ENCODE measurements at regions of chr7 and their contacts with region 1.

Region 1: GRCh38 chr7:41940760-41941343 is 238.0 kb upstream of the INHBA start:
- DNase-seq: peak; percentile 80
- ATAC-seq: peak; percentile 73
- H3K4me3 ChIP-seq: no peak overlapping the region
- H3K4me3 Mint-ChIP-seq: peak overlapping the region; percentile 68
- H3K27ac ChIP-seq: no peak overlapping the region
- H3K27ac Mint-ChIP-seq: no peak overlapping the region
- H3K4me1 ChIP-seq: peaks cover 17 to 24% of the 10 kb centered on the region in 2 donors
- H3K4me1 Mint-ChIP-seq: peaks cover 27% of the 10 kb centered on the region
- H3K27me3 ChIP-seq: peaks cover 0 to 4% (median 0%) of the 10 kb centered on the region in 4 experiments
- H3K27me3 Mint-ChIP-seq: peaks cover 9% of the 10 kb centered on the region
- CTCF ChIP-seq: peak; percentile 91

Region 2: GRCh38 chr7:41732843-41733306 is 208.0 kb before region 1 on chr7:
- CTCF ChIA-PET with region 1: no interaction called
- POLR2A ChIA-PET with region 1: no interaction called
- intact Hi-C with region 1: no loop called
- DNase-seq: no peak
- ATAC-seq: no peak
- H3K4me3 ChIP-seq: no peak overlapping the region
- H3K4me3 Mint-ChIP-seq: peak overlapping the region; percentile 8
- H3K27ac ChIP-seq: no peak overlapping the region
- H3K27ac Mint-ChIP-seq: no peak overlapping the region
- H3K4me1 ChIP-seq: peaks cover 7 to 8% of the 10 kb centered on the region in 2 donors
- H3K4me1 Mint-ChIP-seq: peaks cover 13% of the 10 kb centered on the region
- H3K27me3 ChIP-seq: no peaks in the 10 kb centered on the region
- H3K27me3 Mint-ChIP-seq: no peaks in the 10 kb centered on the region
- CTCF ChIP-seq: no peak

Region 3: GRCh38 chr7:41916450-41916959 is 24.3 kb before region 1 on chr7:
- CTCF ChIA-PET with region 1: interaction called, 23 read pairs
- POLR2A ChIA-PET with region 1: no interaction called
- intact Hi-C with region 1: no loop called
- DNase-seq: no peak
- ATAC-seq: no peak
- H3K4me3 ChIP-seq: no peak overlapping the region
- H3K4me3 Mint-ChIP-seq: no peak overlapping the region
- H3K27ac ChIP-seq: no peak overlapping the region
- H3K27ac Mint-ChIP-seq: no peak overlapping the region
- H3K4me1 ChIP-seq: no peaks in the 10 kb centered on the region
- H3K4me1 Mint-ChIP-seq: peaks cover 2% of the 10 kb centered on the region
- H3K27me3 ChIP-seq: peaks cover 0 to 2% (median 0%) of the 10 kb centered on the region in 4 experiments
- H3K27me3 Mint-ChIP-seq: peaks cover 3% of the 10 kb centered on the region
- CTCF ChIP-seq: no peak

Region 4: DNA sequence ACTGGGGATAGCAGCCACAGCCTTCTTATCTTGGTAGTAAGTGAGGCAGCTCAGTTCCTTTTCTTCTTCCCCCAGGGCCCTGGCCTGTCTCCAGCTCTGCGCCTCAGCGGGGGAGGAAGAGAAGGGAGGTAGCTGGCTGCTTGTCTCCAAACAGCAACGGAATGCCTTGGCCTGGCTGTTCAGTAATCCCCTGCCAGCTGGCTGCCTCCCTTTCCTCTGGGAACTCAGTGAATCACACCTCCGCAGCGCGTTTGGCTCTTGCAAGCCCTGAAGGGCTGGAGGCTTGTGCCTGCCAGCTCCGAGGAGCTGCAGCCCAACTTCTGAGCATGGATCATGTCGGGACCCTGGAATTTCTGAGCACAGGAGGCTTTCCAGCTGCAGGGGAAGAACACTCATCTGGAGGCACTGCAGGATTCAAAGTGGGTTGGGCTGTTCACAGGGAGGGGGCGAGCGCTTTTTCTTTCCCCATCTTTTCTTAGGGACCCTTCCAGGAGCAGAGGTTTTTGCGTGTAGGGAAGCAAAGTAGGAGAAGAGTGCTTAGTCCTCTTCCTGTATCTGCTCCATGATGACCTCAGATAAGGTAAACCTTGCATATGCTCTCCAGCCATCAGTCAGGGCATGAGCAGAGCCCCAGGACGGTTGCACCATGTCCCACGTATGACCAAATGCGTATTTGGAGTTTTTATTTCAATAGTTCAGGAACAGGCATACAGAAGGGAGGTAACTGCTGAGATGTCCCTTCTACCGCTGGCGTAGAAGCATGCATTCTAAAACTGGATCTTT is 15.2 kb after region 1 on chr7:
- CTCF ChIA-PET with region 1: interaction called, 11 read pairs
- POLR2A ChIA-PET with region 1: no interaction called
- intact Hi-C with region 1: no loop called
- DNase-seq: no peak
- ATAC-seq: no peak
- H3K4me3 ChIP-seq: no peak overlapping the region
- H3K4me3 Mint-ChIP-seq: no peak overlapping the region
- H3K27ac ChIP-seq: no peak overlapping the region
- H3K27ac Mint-ChIP-seq: no peak overlapping the region
- H3K4me1 ChIP-seq: no peaks in the 10 kb centered on the region
- H3K4me1 Mint-ChIP-seq: no peaks in the 10 kb centered on the region
- H3K27me3 ChIP-seq: peaks cover 0 to 26% (median 9%) of the 10 kb centered on the region in 4 experiments
- H3K27me3 Mint-ChIP-seq: peaks cover 54% of the 10 kb centered on the region
- CTCF ChIP-seq: no peak

Region 5: DNA sequence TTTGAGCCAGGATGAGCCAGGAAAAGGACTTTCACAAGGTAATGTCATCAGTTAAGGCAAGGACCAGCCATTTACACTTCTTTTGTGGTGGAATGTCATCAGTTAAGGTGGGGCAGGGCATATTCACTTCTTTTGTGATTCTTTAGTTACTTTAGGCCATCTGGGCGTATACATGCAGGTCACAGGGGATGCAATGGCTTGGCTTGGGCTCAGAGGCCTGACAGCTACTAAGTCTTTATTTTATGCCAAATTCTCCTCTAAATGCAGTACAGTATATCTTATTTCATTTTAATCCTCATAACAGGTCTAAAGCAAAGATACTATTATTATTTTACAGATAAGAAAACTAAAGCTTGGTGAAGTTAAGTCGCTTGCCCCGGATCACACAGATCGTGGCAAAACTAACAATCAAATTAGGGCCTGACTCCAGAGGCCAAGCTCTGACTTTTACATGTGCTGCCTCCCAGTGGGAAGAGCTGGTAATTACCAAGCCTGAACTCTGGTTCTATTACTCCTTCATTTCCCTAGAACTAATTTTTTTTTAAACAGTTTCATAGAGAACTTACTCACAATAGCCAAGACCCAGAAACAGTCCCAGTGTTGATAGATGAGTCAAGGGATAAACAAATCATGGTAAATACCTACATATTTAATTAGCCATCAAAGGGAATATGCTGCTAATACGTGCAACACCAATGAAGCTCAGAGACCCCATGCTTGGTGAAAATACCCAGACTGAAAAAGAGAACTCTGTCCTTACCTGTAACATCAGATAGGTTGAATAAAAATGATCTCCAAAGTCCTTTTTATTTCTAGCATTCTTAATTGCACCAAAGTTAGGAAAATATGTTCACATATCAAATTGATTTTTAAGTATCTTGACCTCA is 935.6 kb after region 1 on chr7:
- CTCF ChIA-PET with region 1: interaction called, 10 read pairs
- POLR2A ChIA-PET with region 1: no interaction called
- intact Hi-C with region 1: no loop called
- DNase-seq: peak; percentile 63
- ATAC-seq: peak; percentile 54
- H3K4me3 ChIP-seq: no peak overlapping the region
- H3K4me3 Mint-ChIP-seq: no peak overlapping the region
- H3K27ac ChIP-seq: no peak overlapping the region
- H3K27ac Mint-ChIP-seq: no peak overlapping the region
- H3K4me1 ChIP-seq: no peaks in the 10 kb centered on the region
- H3K4me1 Mint-ChIP-seq: peaks cover 2% of the 10 kb centered on the region
- H3K27me3 ChIP-seq: no peaks in the 10 kb centered on the region
- H3K27me3 Mint-ChIP-seq: no peaks in the 10 kb centered on the region
- CTCF ChIP-seq: peak; percentile 83

Region 6: GRCh38 chr7:43721193-43721806 is 1780.4 kb after region 1 on chr7:
- CTCF ChIA-PET with region 1: no interaction called
- POLR2A ChIA-PET with region 1: no interaction called
- intact Hi-C with region 1: loop called (anchors 5 kb)
- DNase-seq: peak; percentile 73
- ATAC-seq: peak; percentile 33
- H3K4me3 ChIP-seq: no peak overlapping the region
- H3K4me3 Mint-ChIP-seq: no peak overlapping the region
- H3K27ac ChIP-seq: no peak overlapping the region
- H3K27ac Mint-ChIP-seq: no peak overlapping the region
- H3K4me1 ChIP-seq: no peaks in the 10 kb centered on the region
- H3K4me1 Mint-ChIP-seq: peaks cover 22% of the 10 kb centered on the region
- H3K27me3 ChIP-seq: no peaks in the 10 kb centered on the region
- H3K27me3 Mint-ChIP-seq: no peaks in the 10 kb centered on the region
- CTCF ChIP-seq: peak; percentile 89